ENCODE measurements at regions of chr3 and their contacts with region 1.

Region 1: GRCh38 chr3:194134757-194135528 is 1.0 kb upstream of the HES1 start:
- DNase-seq: peak; percentile 98
- H3K4me3 ChIP-seq: peak overlapping the region; percentile 61
- H3K4me3 Mint-ChIP-seq: peak overlapping the region; percentile 88
- H3K27ac Mint-ChIP-seq: peak overlapping the region; percentile 41
- H3K4me1 ChIP-seq: peaks cover 37% of the 10 kb centered on the region
- H3K4me1 Mint-ChIP-seq: peaks cover 32% of the 10 kb centered on the region
- H3K27me3 ChIP-seq: no peaks in the 10 kb centered on the region
- H3K27me3 Mint-ChIP-seq: no peaks in the 10 kb centered on the region
- CTCF ChIP-seq: no peak

Region 2: DNA sequence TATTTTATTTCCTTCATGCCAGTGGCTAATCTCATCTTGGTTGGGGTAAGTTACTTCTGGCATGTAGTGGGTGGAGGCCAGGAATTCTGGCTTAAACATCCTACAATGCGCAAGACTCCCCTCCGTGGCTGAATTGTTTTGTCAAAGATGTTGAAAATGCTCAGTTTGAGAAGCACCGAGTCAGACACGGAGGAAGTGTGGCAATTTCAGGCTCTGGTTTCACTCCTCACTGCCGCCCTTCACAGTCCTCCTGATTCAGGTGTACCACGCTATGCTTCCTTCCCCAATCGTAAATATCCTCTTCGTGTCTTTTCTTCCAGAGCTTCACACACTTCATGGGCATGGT is 391.3 kb before region 1 on chr3:
- CTCF ChIA-PET with region 1: no interaction called
- POLR2A ChIA-PET with region 1: interaction called, 7 read pairs
- intact Hi-C with region 1: loop called (anchors 2 kb)
- DNase-seq: peak in 1 of 2 experiments; percentile 57
- H3K4me3 ChIP-seq: peak overlapping the region; percentile 35
- H3K4me3 Mint-ChIP-seq: peak overlapping the region; percentile 77
- H3K27ac Mint-ChIP-seq: peak overlapping the region; percentile 87
- H3K4me1 ChIP-seq: peaks cover 30% of the 10 kb centered on the region
- H3K4me1 Mint-ChIP-seq: peaks cover 24% of the 10 kb centered on the region
- H3K27me3 ChIP-seq: no peaks in the 10 kb centered on the region
- H3K27me3 Mint-ChIP-seq: no peaks in the 10 kb centered on the region
- CTCF ChIP-seq: no peak

Region 3: GRCh38 chr3:193910886-193911738 is 223.8 kb before region 1 on chr3:
- CTCF ChIA-PET with region 1: interaction called, 6 read pairs
- POLR2A ChIA-PET with region 1: interaction called, 17 read pairs
- intact Hi-C with region 1: loop called (anchors 1 kb)
- DNase-seq: peak; percentile 75 to 90
- H3K4me3 ChIP-seq: peak overlapping the region; percentile 37
- H3K4me3 Mint-ChIP-seq: peak overlapping the region; percentile 74
- H3K27ac Mint-ChIP-seq: peak overlapping the region; percentile 90
- H3K4me1 ChIP-seq: peaks cover 66% of the 10 kb centered on the region
- H3K4me1 Mint-ChIP-seq: peaks cover 40% of the 10 kb centered on the region
- H3K27me3 ChIP-seq: no peaks in the 10 kb centered on the region
- H3K27me3 Mint-ChIP-seq: no peaks in the 10 kb centered on the region
- CTCF ChIP-seq: no peak

Region 4: DNA sequence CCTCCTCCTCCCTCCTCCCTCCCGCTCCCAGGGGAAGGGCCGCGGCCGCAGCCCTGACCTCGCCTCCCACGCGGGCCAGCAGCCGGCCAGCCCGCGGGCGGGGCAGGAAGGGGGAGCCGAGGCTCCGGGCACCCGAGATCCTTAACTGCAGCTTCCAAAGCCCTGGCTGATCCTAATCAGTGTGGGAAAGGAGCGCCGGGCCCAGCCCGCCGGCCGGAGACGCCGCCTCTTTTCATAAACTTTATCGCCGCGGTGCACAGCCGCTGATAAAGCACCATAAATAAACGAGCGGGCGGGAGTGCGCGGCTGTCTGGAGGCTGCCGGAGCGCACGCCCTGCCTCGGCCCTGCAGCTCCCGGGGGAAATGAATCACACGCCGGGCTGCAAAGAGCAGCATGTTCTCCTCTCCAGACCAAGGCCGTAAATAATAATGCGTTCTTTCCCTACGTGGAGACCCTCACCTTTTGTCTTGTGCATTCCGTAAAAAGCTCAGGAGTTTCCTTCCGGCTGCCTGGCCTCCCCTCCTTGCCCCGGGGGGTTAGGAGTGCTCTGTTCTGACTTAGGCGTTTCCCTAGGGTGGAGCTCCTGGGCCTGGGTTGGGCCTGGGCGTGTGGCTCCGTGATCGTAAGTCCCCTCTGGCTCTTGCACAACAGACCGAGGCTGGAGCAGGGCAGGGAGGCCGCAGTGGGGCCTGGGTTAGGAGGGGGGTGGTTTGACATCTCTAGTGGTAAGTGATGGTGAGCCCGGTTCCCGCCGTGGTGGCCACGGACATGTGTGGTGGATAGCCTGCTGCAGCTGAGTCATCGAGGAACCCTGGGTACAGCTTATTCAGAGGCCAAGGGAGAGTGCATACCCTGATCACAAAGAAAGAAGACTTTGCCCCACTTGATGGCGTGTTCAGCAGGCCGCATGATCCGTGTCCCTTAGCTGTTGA is 131.6 kb before region 1 on chr3:
- CTCF ChIA-PET with region 1: interaction called, 7 read pairs
- POLR2A ChIA-PET with region 1: interaction called, 8 read pairs
- intact Hi-C with region 1: loop called (anchors 1 kb)
- DNase-seq: peak; percentile 87 to 94
- H3K4me3 ChIP-seq: peak overlapping the region; percentile 35
- H3K4me3 Mint-ChIP-seq: peak overlapping the region; percentile 76
- H3K27ac Mint-ChIP-seq: peak overlapping the region; percentile 81
- H3K4me1 ChIP-seq: peaks cover 42% of the 10 kb centered on the region
- H3K4me1 Mint-ChIP-seq: peaks cover 29% of the 10 kb centered on the region
- H3K27me3 ChIP-seq: no peaks in the 10 kb centered on the region
- H3K27me3 Mint-ChIP-seq: no peaks in the 10 kb centered on the region
- CTCF ChIP-seq: no peak

Region 5: DNA sequence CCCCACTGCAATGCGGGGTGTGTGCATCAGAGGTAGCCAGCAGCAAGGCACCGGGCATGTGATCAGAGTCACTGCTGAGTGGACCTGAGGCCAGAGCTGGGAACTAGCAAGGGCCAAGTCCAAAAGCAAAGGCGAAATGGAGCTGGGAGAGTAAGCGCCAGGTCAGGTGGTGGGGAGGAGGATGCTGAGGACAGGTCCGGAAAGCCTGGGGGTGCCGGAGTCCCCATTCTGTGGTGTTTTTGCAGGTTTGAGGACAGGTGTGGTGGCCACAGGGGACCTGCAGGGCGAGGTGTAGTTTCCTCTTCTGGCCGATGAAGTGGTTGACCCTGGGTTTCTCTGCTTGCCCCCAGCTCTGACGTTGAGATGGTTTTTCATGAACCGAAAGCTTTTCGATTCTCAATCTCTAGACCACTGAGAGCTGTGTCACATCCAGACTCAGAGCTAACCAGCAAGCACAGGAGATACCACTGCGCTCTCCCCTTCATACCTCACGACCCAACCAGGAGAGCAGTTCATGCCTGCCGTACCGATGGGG is 34.0 kb before region 1 on chr3:
- CTCF ChIA-PET with region 1: interaction called, 15 read pairs
- POLR2A ChIA-PET with region 1: interaction called, 21 read pairs
- intact Hi-C with region 1: no loop called
- DNase-seq: no peak
- H3K4me3 ChIP-seq: no peak overlapping the region
- H3K4me3 Mint-ChIP-seq: peak overlapping the region; percentile 43
- H3K27ac Mint-ChIP-seq: peak overlapping the region; percentile 46
- H3K4me1 ChIP-seq: peaks cover 70% of the 10 kb centered on the region
- H3K4me1 Mint-ChIP-seq: peaks cover 67% of the 10 kb centered on the region
- H3K27me3 ChIP-seq: no peaks in the 10 kb centered on the region
- H3K27me3 Mint-ChIP-seq: no peaks in the 10 kb centered on the region
- CTCF ChIP-seq: no peak

Region 6: GRCh38 chr3:194296454-194297263 is 161.7 kb after region 1 on chr3:
- CTCF ChIA-PET with region 1: interaction called, 5 read pairs
- POLR2A ChIA-PET with region 1: interaction called, 3 read pairs
- intact Hi-C with region 1: loop called (anchors 2 kb)
- DNase-seq: peak; percentile 82 to 86
- H3K4me3 ChIP-seq: peak overlapping the region; percentile 54
- H3K4me3 Mint-ChIP-seq: peak overlapping the region; percentile 71
- H3K27ac Mint-ChIP-seq: peak overlapping the region; percentile 80
- H3K4me1 ChIP-seq: peaks cover 30% of the 10 kb centered on the region
- H3K4me1 Mint-ChIP-seq: peaks cover 13% of the 10 kb centered on the region
- H3K27me3 ChIP-seq: no peaks in the 10 kb centered on the region
- H3K27me3 Mint-ChIP-seq: no peaks in the 10 kb centered on the region
- CTCF ChIP-seq: no peak

Region 7: GRCh38 chr3:194573691-194574437 is 438.9 kb after region 1 on chr3:
- CTCF ChIA-PET with region 1: no interaction called
- POLR2A ChIA-PET with region 1: no interaction called
- intact Hi-C with region 1: no loop called
- DNase-seq: peak; percentile 55 to 62
- H3K4me3 ChIP-seq: no peak overlapping the region
- H3K4me3 Mint-ChIP-seq: no peak overlapping the region
- H3K27ac Mint-ChIP-seq: peak overlapping the region; percentile 98
- H3K4me1 ChIP-seq: peaks cover 54% of the 10 kb centered on the region
- H3K4me1 Mint-ChIP-seq: peaks cover 51% of the 10 kb centered on the region
- H3K27me3 ChIP-seq: no peaks in the 10 kb centered on the region
- H3K27me3 Mint-ChIP-seq: no peaks in the 10 kb centered on the region
- CTCF ChIP-seq: peak; percentile 62 to 69

Measured in Caco-2 (cell line).